ENCODE measurements at regions of chr11 and their contacts with region 1.

Region 1: DNA sequence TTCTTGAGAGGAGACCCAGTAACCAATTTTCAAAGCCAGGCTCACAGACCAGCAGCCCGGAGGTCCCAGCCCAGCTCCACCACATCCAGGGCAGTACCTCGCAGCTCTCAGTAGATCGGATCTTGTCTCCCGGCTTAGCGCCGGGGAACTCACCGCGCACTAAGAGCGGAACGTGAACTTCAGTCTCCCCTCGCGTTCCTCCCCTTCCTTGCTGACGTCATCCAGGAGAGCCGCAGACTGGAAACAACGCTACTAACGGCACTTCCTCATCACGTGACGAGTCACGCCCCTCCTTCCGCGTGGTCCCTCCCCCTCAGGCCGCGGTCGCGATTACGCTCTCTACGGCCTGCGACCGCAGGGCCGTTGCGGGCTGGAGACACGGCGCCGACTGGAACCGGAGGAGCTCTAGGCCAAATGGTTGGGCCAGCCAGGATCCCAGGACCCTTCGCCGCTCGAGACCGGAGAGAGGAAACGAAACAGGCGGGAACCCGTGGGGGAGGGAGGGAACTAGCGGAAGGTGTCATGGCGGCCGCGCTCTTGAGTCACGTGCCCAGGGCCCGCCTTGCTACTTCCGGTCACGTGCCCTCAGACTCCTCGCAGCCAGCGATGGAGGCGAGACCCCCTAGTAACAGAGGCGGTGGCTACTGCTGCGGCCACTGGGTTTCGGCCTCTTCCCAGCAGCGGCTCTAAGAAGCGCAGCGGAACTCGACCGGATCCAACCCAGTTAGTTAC is at the starts of genes GTF2H1 and HPS5:
- DNase-seq: peak; percentile 99
- H3K4me3 ChIP-seq: peak within 1 kb of the TSS; percentile 91
- H3K27ac ChIP-seq: peak within 1 kb of the TSS; percentile 90
- H3K4me1 ChIP-seq: peaks cover 37% of the 10 kb centered on the region
- H3K27me3 ChIP-seq: no peaks in the 10 kb centered on the region
- total RNA-seq, gene GTF2H1: 77.4 and 89.8 TPM in 2 replicates
- total RNA-seq, gene HPS5: 34.7 and 34.9 TPM in 2 replicates

Region 2: GRCh38 chr11:18383388-18384156 is 61.4 kb after region 1 on chr11:
- in situ Hi-C with region 1: loop called (anchors 10 kb)
- DNase-seq: peak; percentile 100
- H3K4me3 ChIP-seq: peak overlapping the region; percentile 54
- H3K27ac ChIP-seq: peak overlapping the region; percentile 99
- H3K4me1 ChIP-seq: peaks cover 32% of the 10 kb centered on the region
- H3K27me3 ChIP-seq: no peaks in the 10 kb centered on the region